ENCODE measurements at regions of chr11 and their contacts with region 1.

Region 1: GRCh38 chr11:4187055-4187988 is 92.7 kb downstream of the RRM1 start:
- DNase-seq: peak; percentile 94

Region 2: GRCh38 chr11:4393209-4393857 is 206.0 kb after region 1 on chr11 and contains the start of gene TRIM21:
- intact Hi-C with region 1: loop called (anchors 5 kb)
- DNase-seq: peak; percentile 94
- total RNA-seq, gene TRIM21: 5.9 TPM

Region 3: GRCh38 chr11:4493480-4493818 is 306.1 kb after region 1 on chr11:
- intact Hi-C with region 1: loop called (anchors 1 kb)
- DNase-seq: no peak